Activated CD8-positive, alpha-beta T cell treated with anti-CD3 and anti-CD28 coated beads for 36 hours (primary cell): ENCODE measurements at regions of chr9 and their contacts with region 1.

Region 1: GRCh38 chr9:33415501-33416038 is 13.2 kb upstream of the AQP7 start:
- DNase-seq: peak; percentile 97
- ATAC-seq: peak; percentile 92
- H3K4me3 Mint-ChIP-seq: peak overlapping the region; percentile 25
- H3K27ac Mint-ChIP-seq: peak overlapping the region; percentile 91
- H3K4me1 Mint-ChIP-seq: peaks cover 41% of the 10 kb centered on the region
- H3K27me3 Mint-ChIP-seq: no peaks in the 10 kb centered on the region
- CTCF ChIP-seq: peak; percentile 79

Region 2: GRCh38 chr9:33350310-33350709 is 65.3 kb before region 1 on chr9:
- CTCF ChIA-PET with region 1: no interaction called
- POLR2A ChIA-PET with region 1: no interaction called
- intact Hi-C with region 1: no loop called
- DNase-seq: no peak
- ATAC-seq: no peak
- H3K4me3 Mint-ChIP-seq: no peak overlapping the region
- H3K27ac Mint-ChIP-seq: no peak overlapping the region
- H3K4me1 Mint-ChIP-seq: peaks cover 2% of the 10 kb centered on the region
- H3K27me3 Mint-ChIP-seq: no peaks in the 10 kb centered on the region
- CTCF ChIP-seq: no peak

Region 3: DNA sequence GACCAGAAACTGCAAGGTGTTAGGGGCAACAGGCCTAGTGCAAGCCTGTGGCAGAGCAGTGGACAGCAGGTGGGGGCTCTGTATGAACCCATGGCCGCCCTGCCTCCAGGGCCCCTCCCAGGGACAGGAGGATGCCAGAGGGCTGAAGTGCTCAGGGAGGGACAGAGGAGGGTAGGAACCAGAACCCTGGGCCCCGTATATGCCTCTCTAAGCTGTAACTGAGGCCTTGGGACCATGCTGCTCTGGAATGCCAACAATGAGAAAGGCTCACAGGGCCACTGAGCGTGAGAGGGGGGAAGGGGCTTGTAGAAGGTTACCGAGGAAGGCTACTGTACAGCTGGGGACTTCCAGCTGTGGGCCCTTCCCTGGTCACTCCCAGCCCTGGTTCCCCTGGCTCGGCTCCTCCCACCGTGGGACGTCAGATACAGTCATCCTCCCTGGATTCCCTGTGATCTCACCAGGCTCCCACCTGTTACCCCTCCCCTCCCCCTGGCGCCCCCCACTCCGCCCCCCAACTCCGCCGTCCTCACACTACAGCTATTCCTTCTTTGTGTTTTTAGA is 34.3 kb before region 1 on chr9:
- CTCF ChIA-PET with region 1: interaction called, 51 read pairs
- POLR2A ChIA-PET with region 1: no interaction called
- intact Hi-C with region 1: no loop called
- DNase-seq: no peak
- ATAC-seq: no peak
- H3K4me3 Mint-ChIP-seq: no peak overlapping the region
- H3K27ac Mint-ChIP-seq: no peak overlapping the region
- H3K4me1 Mint-ChIP-seq: no peaks in the 10 kb centered on the region
- H3K27me3 Mint-ChIP-seq: no peaks in the 10 kb centered on the region
- CTCF ChIP-seq: no peak

Region 4: DNA sequence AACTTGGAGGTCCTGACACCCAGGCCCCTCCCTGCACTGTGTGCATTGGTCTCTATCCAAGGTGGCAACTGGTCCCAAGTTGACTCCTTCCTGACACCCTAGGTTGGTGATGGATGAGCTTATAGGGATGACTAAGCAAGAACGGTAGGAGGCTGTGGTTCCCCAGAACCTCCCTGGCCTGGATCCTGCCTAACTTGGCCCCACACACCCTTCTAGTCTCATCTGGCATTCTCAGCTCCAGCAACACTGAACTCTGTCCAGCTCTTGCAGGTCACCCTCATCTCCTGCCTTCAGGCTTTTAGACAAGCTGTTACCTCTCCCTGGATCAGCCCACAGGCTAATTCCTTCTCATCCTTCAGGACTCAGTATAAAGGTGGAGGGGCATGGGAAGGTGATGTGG is 15.4 kb after region 1 on chr9:
- CTCF ChIA-PET with region 1: interaction called, 22 read pairs
- POLR2A ChIA-PET with region 1: no interaction called
- intact Hi-C with region 1: no loop called
- DNase-seq: no peak
- ATAC-seq: peak; percentile 26
- H3K4me3 Mint-ChIP-seq: no peak overlapping the region
- H3K27ac Mint-ChIP-seq: no peak overlapping the region
- H3K4me1 Mint-ChIP-seq: peaks cover 3% of the 10 kb centered on the region
- H3K27me3 Mint-ChIP-seq: no peaks in the 10 kb centered on the region
- CTCF ChIP-seq: no peak

Region 5: GRCh38 chr9:33452828-33453271 is 37.3 kb after region 1 on chr9:
- CTCF ChIA-PET with region 1: interaction called, 36 read pairs
- POLR2A ChIA-PET with region 1: interaction called, 11 read pairs
- intact Hi-C with region 1: loop called (anchors 5 kb)
- DNase-seq: peak; percentile 80
- ATAC-seq: peak; percentile 84
- H3K4me3 Mint-ChIP-seq: no peak overlapping the region
- H3K27ac Mint-ChIP-seq: peak overlapping the region; percentile 73
- H3K4me1 Mint-ChIP-seq: peaks cover 60% of the 10 kb centered on the region
- H3K27me3 Mint-ChIP-seq: no peaks in the 10 kb centered on the region
- CTCF ChIP-seq: peak; percentile 88

Region 6: DNA sequence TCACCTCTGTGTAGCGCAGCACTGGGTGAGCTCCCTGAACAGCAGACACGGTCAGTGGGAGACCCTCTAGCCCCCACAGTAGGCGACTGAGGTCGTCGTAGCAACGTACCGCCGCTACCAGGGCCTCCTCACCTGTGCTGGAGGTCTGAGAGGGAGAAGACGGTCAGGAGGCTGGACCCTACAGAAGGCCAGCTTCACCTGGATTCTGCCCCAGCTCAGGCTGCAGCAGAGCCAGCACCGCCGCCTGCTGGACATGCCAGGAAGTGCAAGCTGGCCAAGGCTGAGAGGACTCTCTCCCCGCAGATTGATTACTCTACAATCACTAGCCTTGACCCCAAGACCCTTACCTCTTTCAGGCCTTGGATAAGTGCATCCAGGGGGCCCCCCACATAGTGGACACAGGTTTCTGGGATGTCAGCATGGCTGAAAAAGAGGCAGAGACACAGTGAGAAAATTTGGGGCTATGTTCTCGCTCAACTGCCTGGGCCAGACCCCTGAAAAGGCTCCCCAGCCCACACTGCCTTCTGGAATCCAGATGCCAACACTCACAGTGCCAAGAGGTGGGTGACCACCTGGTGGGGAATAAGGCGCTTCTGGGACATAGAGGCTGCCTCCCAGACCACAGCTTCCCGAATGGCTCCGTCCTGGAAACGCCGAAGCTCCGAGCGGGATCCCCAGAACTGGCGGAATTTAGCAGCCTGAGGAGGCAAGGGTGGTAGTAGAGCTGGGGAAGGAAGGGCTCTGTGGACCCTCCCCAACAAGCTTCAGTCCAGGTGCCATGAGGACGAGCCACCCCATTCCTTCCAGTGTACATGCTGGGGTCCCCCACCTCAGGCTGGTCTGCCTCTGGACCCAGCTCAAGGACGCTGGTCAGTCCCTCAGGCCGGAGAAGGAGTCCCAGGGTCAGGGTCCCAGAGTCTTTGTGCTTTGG is 51.3 kb after region 1 on chr9:
- CTCF ChIA-PET with region 1: interaction called, 52 read pairs
- POLR2A ChIA-PET with region 1: no interaction called
- intact Hi-C with region 1: no loop called
- DNase-seq: peak; percentile 82
- ATAC-seq: peak; percentile 91
- H3K4me3 Mint-ChIP-seq: no peak overlapping the region
- H3K27ac Mint-ChIP-seq: no peak overlapping the region
- H3K4me1 Mint-ChIP-seq: peaks cover 10% of the 10 kb centered on the region
- H3K27me3 Mint-ChIP-seq: no peaks in the 10 kb centered on the region
- CTCF ChIP-seq: peak; percentile 97